Panc1 (cell line): ENCODE measurements at regions of chr18 and their contacts with region 1.

Region 1: GRCh38 chr18:33596178-33596854 is 18.3 kb downstream of the ASXL3 start:
- DNase-seq: peak; percentile 79
- ATAC-seq: peak; percentile 71
- H3K4me3 ChIP-seq: no peak overlapping the region
- H3K27ac ChIP-seq: no peak overlapping the region
- H3K4me1 ChIP-seq: 0 out of 2 replicates have a peak, but pooled peaks cover 3% of the 10 kb centered on the region
- H3K27me3 ChIP-seq: no peaks in the 10 kb centered on the region
- CTCF ChIP-seq: no peak

Region 2: DNA sequence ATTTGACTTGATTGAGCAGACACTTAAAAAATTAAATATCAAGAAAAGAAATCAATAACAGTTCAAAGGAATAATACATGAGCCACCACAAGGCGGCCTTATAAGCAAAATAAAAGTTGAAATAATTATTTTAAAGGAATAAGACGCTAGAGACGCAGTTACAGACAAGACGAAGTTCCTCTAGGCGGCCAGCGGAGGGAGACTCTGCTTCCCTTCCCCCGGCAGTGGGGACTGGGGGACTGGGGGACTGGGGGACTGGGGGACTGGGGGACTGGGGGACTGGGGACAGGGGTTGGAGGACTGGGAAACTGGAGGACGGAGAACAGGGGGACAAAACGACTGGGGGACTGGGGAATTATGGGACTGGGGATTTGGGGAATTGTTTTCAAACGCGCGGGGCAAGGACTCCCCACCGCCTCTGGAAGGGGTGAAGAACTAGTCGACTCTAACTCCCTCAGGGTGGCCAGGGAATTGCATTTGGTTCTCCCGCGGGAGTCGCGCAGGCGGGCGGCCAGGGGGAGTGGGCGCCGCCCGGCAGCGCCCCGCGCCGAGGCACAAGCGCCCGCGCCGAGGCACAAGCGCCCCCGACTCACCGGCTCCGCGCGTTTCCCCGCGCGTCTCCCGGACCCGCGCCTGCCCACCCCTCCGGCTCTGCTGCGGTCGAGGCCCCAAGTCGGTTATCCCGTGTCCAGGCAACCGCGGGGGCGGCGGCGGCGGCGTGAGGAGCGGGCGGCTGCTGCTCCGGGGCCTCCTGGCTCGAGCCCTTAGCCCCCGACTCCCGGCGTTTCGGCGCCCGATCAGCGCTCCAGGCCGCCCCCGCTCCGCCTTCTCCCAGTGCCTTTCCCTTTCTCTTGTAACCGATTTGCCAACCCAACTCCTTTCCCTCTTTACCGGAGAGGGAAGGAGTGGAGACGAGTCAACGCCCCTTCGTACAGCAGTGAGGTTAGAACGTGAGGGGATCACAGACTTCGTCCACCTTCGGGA is 156.0 kb before region 1 on chr18 and contains the start of gene CCDC178:
- CTCF ChIA-PET with region 1: no interaction called
- POLR2A ChIA-PET with region 1: no interaction called
- in situ Hi-C with region 1: no loop called
- intact Hi-C with region 1: no loop called
- DNase-seq: no peak
- ATAC-seq: no peak
- H3K4me3 ChIP-seq: peak within 1 kb of the TSS in 1 of 2 experiments; percentile 13; a peak in 1 of 4 replicates
- H3K27ac ChIP-seq: no peak within 1 kb of the TSS
- H3K4me1 ChIP-seq: no peaks in the 10 kb centered on the region
- H3K27me3 ChIP-seq: no peaks in the 10 kb centered on the region
- CTCF ChIP-seq: 0 out of 2 replicates have a peak, but pooled peaks have one; percentile 9
- total RNA-seq, gene CCDC178: not detected

Region 3: DNA sequence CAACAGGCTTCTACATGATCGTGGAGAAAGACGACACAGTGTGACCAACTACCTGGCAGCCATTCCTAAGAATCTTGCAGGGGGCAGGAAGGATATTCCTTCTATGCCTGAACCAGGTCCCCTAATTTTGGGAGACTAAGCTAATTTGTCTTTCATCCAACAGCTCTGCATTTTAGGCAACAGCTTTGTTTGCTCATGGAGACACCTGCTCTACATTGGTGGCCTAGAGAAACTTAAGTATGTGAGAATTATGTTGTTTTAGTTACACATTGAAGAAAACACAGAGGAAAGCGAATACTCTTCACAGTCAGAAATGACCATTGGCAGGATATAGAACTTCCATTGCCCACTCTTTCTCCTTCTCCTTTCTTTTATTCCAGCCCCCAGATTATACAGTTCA is 56.9 kb after region 1 on chr18:
- CTCF ChIA-PET with region 1: no interaction called
- POLR2A ChIA-PET with region 1: no interaction called
- in situ Hi-C with region 1: no loop called
- intact Hi-C with region 1: loop called (anchors 10 kb)
- DNase-seq: no peak
- ATAC-seq: no peak
- H3K4me3 ChIP-seq: no peak overlapping the region
- H3K27ac ChIP-seq: no peak overlapping the region
- H3K4me1 ChIP-seq: no peaks in the 10 kb centered on the region
- H3K27me3 ChIP-seq: no peaks in the 10 kb centered on the region
- CTCF ChIP-seq: no peak